GM12878 (cell line): ENCODE measurements at regions of chr9 and their contacts with region 1.

Region 1: DNA sequence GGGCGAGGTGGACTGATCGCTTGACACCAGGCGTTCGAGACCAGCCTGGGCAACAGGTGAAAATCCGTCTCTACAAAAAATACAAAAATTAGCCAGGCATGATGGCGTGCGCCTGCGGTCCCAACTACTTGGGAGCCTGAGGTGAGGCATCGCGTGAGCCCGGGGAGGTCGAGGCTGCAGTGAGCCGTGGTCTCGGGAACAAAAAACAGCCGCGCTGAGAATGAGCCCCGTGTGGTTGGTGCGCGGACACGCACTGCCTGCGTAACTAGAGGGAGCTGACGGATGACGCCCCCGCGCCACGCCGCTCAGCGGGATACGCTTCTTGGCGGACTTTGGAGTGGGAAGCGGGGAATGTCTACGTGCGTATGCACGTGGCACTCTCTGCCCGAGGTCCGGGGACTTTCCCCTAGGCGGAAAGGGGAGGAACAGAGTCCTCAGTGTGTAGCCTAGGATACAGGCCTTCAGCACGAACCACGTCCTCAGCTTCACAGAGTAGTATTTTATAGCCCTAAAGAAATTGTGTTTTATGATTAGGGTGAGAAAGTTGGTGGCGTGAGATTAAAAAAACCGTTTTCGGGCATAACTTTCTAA is at the start of gene RMRP:
- DNase-seq: peak; percentile 96
- ATAC-seq: peak; percentile 93
- H3K4me3 ChIP-seq: peak within 1 kb of the TSS; percentile 85
- H3K27ac ChIP-seq: peak within 1 kb of the TSS; percentile 90
- H3K4me1 ChIP-seq: peaks cover 22% of the 10 kb centered on the region
- H3K27me3 ChIP-seq: no peaks in the 10 kb centered on the region
- CTCF ChIP-seq: no peak
- EP300 ChIP-seq: peak in 1 of 2 experiments; percentile 63; a peak in 3 of 4 replicates
- POLR2A ChIP-seq: no peak
- RAD21 ChIP-seq: no peak
- polyA plus RNA-seq, gene RMRP: not detected

Region 2: DNA sequence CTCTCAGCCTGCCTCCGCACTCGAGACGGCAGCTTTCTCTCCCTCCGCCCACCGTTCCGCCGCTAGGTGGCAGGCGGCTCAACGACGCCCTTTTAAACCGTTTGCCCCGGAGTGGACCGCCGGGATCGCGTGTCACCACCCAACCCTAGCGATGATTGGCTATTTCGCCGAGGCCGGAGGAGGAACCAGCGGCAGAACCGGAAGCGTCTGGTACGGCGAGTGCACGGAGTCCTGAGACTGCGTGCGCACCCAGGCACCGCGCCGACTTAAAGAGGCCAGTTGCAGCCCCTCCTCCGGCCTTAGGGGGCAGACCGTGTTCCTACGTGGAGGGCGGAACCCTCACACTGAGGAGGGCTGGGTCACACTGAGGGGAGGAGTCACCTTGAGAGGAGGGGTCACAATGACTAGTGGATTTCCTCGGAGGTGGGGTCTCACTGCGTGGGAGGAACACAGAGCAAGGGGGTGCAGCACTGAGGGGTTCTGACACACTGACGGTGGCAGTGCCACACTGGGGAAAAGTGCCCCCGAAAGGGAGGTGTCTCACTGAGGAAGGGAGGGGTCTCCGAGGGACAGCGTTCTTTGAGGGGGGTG is 53.6 kb before region 1 on chr9:
- CTCF ChIA-PET with region 1: interaction called, 10 read pairs
- POLR2A ChIA-PET with region 1: interaction called, 9 read pairs
- RAD21 ChIA-PET with region 1: interaction called, 14 read pairs
- SMC1A ChIA-PET with region 1: interaction called, 8 read pairs
- in situ Hi-C with region 1: no loop called
- intact Hi-C with region 1: loop called (anchors 1 kb)
- DNase-seq: peak; percentile 98
- ATAC-seq: peak; percentile 97
- H3K4me3 ChIP-seq: peak overlapping the region; percentile 77
- H3K27ac ChIP-seq: peak overlapping the region; percentile 73
- H3K4me1 ChIP-seq: peaks cover 8% of the 10 kb centered on the region
- H3K27me3 ChIP-seq: no peaks in the 10 kb centered on the region
- CTCF ChIP-seq: peak; percentile 81 to 98 (median 90)
- EP300 ChIP-seq: no peak
- POLR2A ChIP-seq: peak; percentile 81
- RAD21 ChIP-seq: peak; percentile 76

Region 3: DNA sequence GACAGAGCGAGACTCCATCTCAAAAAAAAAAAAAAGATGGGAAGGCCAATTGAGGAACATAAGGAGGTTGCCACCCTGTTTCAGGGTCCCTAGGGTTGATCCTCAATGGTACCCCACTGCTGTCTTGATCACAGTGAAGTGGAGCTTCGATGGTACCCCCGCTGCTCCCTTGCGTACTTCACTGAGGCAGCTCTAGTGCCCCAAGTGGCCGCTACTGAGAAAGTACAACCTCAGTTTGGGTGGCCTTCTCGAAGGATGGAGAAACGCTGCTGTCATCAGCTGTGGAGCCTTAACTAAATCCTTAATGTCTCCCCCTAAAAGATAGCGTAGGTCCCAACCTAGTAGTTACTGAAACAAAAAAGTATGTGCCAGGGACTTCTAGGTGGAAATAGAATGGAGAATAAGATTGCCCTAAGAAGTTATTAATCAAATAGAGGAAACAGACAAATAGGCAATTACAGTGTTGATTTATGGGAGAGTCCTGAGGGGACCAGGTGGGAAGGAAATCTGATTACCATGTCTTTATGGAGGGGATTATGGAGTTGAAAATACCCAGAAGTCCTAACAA is 46.3 kb before region 1 on chr9:
- CTCF ChIA-PET with region 1: interaction called, 17 read pairs
- POLR2A ChIA-PET with region 1: interaction called, 12 read pairs
- RAD21 ChIA-PET with region 1: interaction called, 7 read pairs
- SMC1A ChIA-PET with region 1: interaction called, 16 read pairs
- in situ Hi-C with region 1: no loop called
- intact Hi-C with region 1: no loop called
- DNase-seq: no peak
- ATAC-seq: peak; percentile 93
- H3K4me3 ChIP-seq: no peak overlapping the region
- H3K27ac ChIP-seq: no peak overlapping the region
- H3K4me1 ChIP-seq: peaks cover under 1% of the 10 kb centered on the region; the same call in 1 of the 2 replicates
- H3K27me3 ChIP-seq: no peaks in the 10 kb centered on the region
- CTCF ChIP-seq: peak; percentile 73 to 80 (median 77)
- EP300 ChIP-seq: no peak
- POLR2A ChIP-seq: no peak
- RAD21 ChIP-seq: peak; percentile 39

Region 4: GRCh38 chr9:35616681-35617459 is 40.8 kb before region 1 on chr9:
- CTCF ChIA-PET with region 1: interaction called, 17 read pairs
- POLR2A ChIA-PET with region 1: interaction called, 22 read pairs
- RAD21 ChIA-PET with region 1: interaction called, 8 read pairs
- SMC1A ChIA-PET with region 1: interaction called, 16 read pairs
- in situ Hi-C with region 1: no loop called
- intact Hi-C with region 1: no loop called
- DNase-seq: no peak
- ATAC-seq: peak; percentile 71
- H3K4me3 ChIP-seq: peak overlapping the region; percentile 72
- H3K27ac ChIP-seq: peak overlapping the region; percentile 57
- H3K4me1 ChIP-seq: peaks cover 44% of the 10 kb centered on the region
- H3K27me3 ChIP-seq: no peaks in the 10 kb centered on the region; a peak in 1 of 4 replicates
- CTCF ChIP-seq: peak; percentile 21 to 37 (median 34); a peak in 4 of 6 replicates
- EP300 ChIP-seq: no peak
- POLR2A ChIP-seq: peak; percentile 80
- RAD21 ChIP-seq: 0 out of 2 replicates have a peak, but pooled peaks have one; percentile 31

Region 5: GRCh38 chr9:35748858-35749514 is 91.3 kb after region 1 on chr9 and contains the starts of genes GBA2 and RGP1:
- CTCF ChIA-PET with region 1: interaction called, 12 read pairs
- POLR2A ChIA-PET with region 1: interaction called, 4 read pairs
- RAD21 ChIA-PET with region 1: interaction called, 6 read pairs
- SMC1A ChIA-PET with region 1: interaction called, 7 read pairs
- in situ Hi-C with region 1: no loop called
- intact Hi-C with region 1: no loop called
- DNase-seq: no peak
- ATAC-seq: peak; percentile 93
- H3K4me3 ChIP-seq: peak within 1 kb of the TSS; percentile 99
- H3K27ac ChIP-seq: peak within 1 kb of the TSS; percentile 75
- H3K4me1 ChIP-seq: peaks cover 4% of the 10 kb centered on the region
- H3K27me3 ChIP-seq: no peaks in the 10 kb centered on the region
- CTCF ChIP-seq: no peak
- EP300 ChIP-seq: no peak
- POLR2A ChIP-seq: peak; percentile 76
- RAD21 ChIP-seq: no peak
- polyA plus RNA-seq, gene GBA2: 15.3 TPM
- polyA plus RNA-seq, gene RGP1: 0.44 to 0.89 TPM

Region 6: GRCh38 chr9:35756275-35757225 is 98.9 kb after region 1 on chr9:
- CTCF ChIA-PET with region 1: interaction called, 11 read pairs
- POLR2A ChIA-PET with region 1: interaction called, 13 read pairs
- RAD21 ChIA-PET with region 1: interaction called, 6 read pairs
- SMC1A ChIA-PET with region 1: interaction called, 3 read pairs
- in situ Hi-C with region 1: no loop called
- intact Hi-C with region 1: no loop called
- DNase-seq: no peak
- ATAC-seq: peak; percentile 86
- H3K4me3 ChIP-seq: peak overlapping the region; percentile 87
- H3K27ac ChIP-seq: peak overlapping the region; percentile 98
- H3K4me1 ChIP-seq: peaks cover 22% of the 10 kb centered on the region
- H3K27me3 ChIP-seq: no peaks in the 10 kb centered on the region
- CTCF ChIP-seq: peak; percentile 76 to 94 (median 82)
- EP300 ChIP-seq: no peak
- POLR2A ChIP-seq: no peak; the same call in none of the 2 replicates
- RAD21 ChIP-seq: peak; percentile 59

Region 7: GRCh38 chr9:35852876-35853865 is 195.5 kb after region 1 on chr9:
- CTCF ChIA-PET with region 1: no interaction called
- POLR2A ChIA-PET with region 1: no interaction called
- RAD21 ChIA-PET with region 1: no interaction called
- SMC1A ChIA-PET with region 1: no interaction called
- in situ Hi-C with region 1: no loop called
- intact Hi-C with region 1: no loop called
- DNase-seq: no peak
- ATAC-seq: no peak
- H3K4me3 ChIP-seq: no peak overlapping the region
- H3K27ac ChIP-seq: no peak overlapping the region
- H3K4me1 ChIP-seq: peaks cover 5% of the 10 kb centered on the region
- H3K27me3 ChIP-seq: no peaks in the 10 kb centered on the region
- CTCF ChIP-seq: no peak
- EP300 ChIP-seq: no peak
- POLR2A ChIP-seq: no peak
- RAD21 ChIP-seq: no peak